ENCODE measurements at regions of chr4 and their contacts with region 1.

Region 1: DNA sequence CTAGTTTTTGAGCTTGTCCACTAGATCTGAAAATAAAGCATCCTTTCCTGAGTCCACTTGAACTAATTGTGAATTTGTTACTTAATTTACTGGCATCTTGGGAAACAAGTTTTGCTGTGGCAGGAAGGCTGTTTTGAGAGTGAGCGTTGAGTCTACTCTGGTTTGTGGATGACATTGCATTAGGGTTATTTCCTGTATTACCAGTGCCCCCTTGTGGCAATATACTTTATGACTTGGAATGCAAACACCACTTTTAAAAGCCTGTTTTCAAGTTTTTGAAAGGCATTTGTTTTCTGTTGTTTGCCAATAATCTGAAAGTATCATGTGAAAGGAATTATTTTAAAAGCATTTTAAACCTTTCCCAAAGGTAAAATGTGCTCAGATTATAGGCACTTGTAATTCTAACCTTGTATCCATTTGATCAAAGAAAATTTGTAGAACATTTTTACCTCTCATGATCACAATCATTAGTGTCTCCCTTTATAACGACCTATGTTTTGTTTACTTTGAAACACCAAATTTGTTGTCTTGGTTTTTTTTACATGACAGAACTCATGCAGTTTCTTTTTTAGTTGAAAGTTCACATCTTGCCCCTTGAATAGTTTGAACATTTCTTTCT is 18.0 kb upstream of the CYP2U1 start:
- DNase-seq: peak; percentile 57 to 62 (median 59)
- H3K4me3 ChIP-seq: no peak overlapping the region
- H3K4me3 Mint-ChIP-seq: no peak overlapping the region
- H3K27ac ChIP-seq: no peak overlapping the region
- H3K27ac Mint-ChIP-seq: no peak overlapping the region
- H3K4me1 ChIP-seq: no peaks in the 10 kb centered on the region
- H3K4me1 Mint-ChIP-seq: peaks cover 0 to 2% (median under 1%) of the 10 kb centered on the region in 4 donors
- H3K27me3 ChIP-seq: no peaks in the 10 kb centered on the region
- H3K27me3 Mint-ChIP-seq: peaks cover 1 to 7% of the 10 kb centered on the region in 2 donors

Region 2: GRCh38 chr4:107824353-107825071 is 88.9 kb before region 1 on chr4 and contains the start of gene SGMS2:
- CTCF ChIA-PET with region 1: no interaction called
- POLR2A ChIA-PET with region 1: no interaction called
- intact Hi-C with region 1: no loop called
- DNase-seq: no peak
- H3K4me3 ChIP-seq: no peak within 1 kb of the TSS
- H3K4me3 Mint-ChIP-seq: peak within 1 kb of the TSS; percentile 69 to 84 (median 74)
- H3K27ac ChIP-seq: no peak within 1 kb of the TSS
- H3K27ac Mint-ChIP-seq: peak within 1 kb of the TSS in 1 of 7 donors; percentile 77
- H3K4me1 ChIP-seq: no peaks in the 10 kb centered on the region
- H3K4me1 Mint-ChIP-seq: peaks cover 3 to 15% (median 11%) of the 10 kb centered on the region in 4 donors
- H3K27me3 ChIP-seq: no peaks in the 10 kb centered on the region
- H3K27me3 Mint-ChIP-seq: peaks cover 23 to 33% of the 10 kb centered on the region in 2 donors
- total RNA-seq, gene SGMS2: 0.28 to 0.67 TPM

Region 3: GRCh38 chr4:107930821-107931774 is 17.7 kb after region 1 on chr4 and contains the start of gene CYP2U1:
- CTCF ChIA-PET with region 1: no interaction called
- POLR2A ChIA-PET with region 1: no interaction called
- intact Hi-C with region 1: loop called (anchors 2 kb)
- DNase-seq: peak; percentile 80 to 85 (median 81)
- H3K4me3 ChIP-seq: peak within 1 kb of the TSS; percentile 63 to 81
- H3K4me3 Mint-ChIP-seq: peak within 1 kb of the TSS; percentile 92 to 97 (median 92)
- H3K27ac ChIP-seq: peak within 1 kb of the TSS; percentile 52
- H3K27ac Mint-ChIP-seq: peak within 1 kb of the TSS; percentile 54 to 97 (median 93)
- H3K4me1 ChIP-seq: peaks cover 18% of the 10 kb centered on the region
- H3K4me1 Mint-ChIP-seq: peaks cover 16 to 38% (median 28%) of the 10 kb centered on the region in 4 donors
- H3K27me3 ChIP-seq: no peaks in the 10 kb centered on the region
- H3K27me3 Mint-ChIP-seq: no peaks in the 10 kb centered on the region
- total RNA-seq, gene CYP2U1: 6.3 to 7.2 TPM

Region 4: DNA sequence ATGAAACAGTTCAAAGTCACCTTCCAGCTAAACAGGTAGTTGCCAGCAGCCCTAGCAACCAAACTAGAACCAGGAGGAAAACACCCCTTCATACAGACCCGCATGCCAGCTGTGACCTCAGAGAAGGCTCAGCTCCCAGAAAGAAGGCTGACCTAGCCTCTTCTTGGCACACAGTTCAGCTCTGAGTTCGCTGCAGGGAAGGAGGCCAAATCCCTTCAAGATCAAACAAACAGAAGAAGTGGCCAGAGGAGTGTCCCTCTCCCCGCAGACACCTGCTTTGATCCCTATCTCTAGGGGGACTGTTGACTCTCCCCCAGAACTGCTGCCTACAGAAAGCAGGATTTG is 132.3 kb after region 1 on chr4:
- CTCF ChIA-PET with region 1: no interaction called
- POLR2A ChIA-PET with region 1: no interaction called
- intact Hi-C with region 1: no loop called
- DNase-seq: no peak
- H3K4me3 ChIP-seq: no peak overlapping the region
- H3K4me3 Mint-ChIP-seq: peak overlapping the region in 1 of 8 donors; percentile 44
- H3K27ac ChIP-seq: no peak overlapping the region
- H3K27ac Mint-ChIP-seq: peak overlapping the region; percentile 19 to 82 (median 54)
- H3K4me1 ChIP-seq: peaks cover 25% of the 10 kb centered on the region
- H3K4me1 Mint-ChIP-seq: peaks cover 25 to 61% (median 48%) of the 10 kb centered on the region in 4 donors
- H3K27me3 ChIP-seq: no peaks in the 10 kb centered on the region
- H3K27me3 Mint-ChIP-seq: no peaks in the 10 kb centered on the region

Measured in CD4-positive, alpha-beta memory T cell (primary cell).